Mammary epithelial cell (primary cell): ENCODE measurements at regions of chr22 and their contacts with region 1.

Region 1: DNA sequence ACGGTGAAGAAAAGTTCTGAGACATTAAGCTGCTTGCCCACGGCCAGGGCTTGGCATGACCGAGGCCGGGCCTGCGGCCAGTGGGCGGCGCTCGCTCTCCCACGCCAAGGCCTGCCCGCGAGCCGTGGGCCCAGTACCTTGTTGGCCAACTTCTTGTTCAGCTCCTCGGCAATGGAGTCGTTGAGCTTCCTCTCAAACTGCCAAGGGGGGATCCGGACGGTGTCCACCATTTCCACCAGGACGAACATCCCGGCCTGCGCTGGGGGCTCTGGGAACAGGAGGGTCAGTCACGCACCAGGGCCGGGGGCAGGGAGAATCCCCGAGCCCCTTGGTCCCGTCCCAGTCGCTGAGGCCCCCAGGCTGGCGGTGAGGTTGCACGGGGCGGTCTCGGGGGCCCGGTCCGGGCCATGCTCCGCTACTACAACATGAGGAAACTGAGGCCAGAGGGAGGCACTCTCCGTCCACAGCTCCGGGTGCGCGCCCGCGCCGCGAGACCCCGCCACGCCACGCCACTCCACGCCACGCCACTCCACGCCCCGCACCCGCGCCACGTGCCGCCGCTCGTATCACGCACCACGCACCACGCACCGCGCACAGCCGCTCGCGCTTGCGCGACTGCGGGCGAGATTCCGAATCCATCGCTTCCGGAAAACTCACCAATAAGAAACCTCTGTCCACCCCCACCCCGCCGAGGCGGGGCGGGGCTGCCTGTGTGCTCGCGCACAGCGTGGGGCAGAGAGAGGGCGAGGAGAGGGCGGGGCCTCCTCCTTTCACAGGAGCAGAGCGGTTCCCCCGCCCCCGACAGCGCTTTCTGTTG is at the start of gene POLR3H:
- DNase-seq: peak; percentile 96
- H3K4me3 ChIP-seq: peak within 1 kb of the TSS; percentile 73 to 95 (median 80)
- H3K27ac ChIP-seq: peak within 1 kb of the TSS; percentile 61
- H3K4me1 ChIP-seq: peaks cover 15% of the 10 kb centered on the region
- H3K27me3 ChIP-seq: no peaks in the 10 kb centered on the region
- CTCF ChIP-seq: peak; percentile 33 to 73
- total RNA-seq, gene POLR3H: 17.2 to 47.0 TPM

Region 2: GRCh38 chr22:41301105-41302020 is 242.7 kb before region 1 on chr22 and contains the start of gene ZC3H7B:
- CTCF ChIA-PET with region 1: no interaction called
- dilution Hi-C with region 1: no loop called
- in situ Hi-C with region 1: no loop called
- intact Hi-C with region 1: no loop called
- DNase-seq: peak; percentile 80
- H3K4me3 ChIP-seq: peak within 1 kb of the TSS; percentile 82 to 90 (median 86)
- H3K27ac ChIP-seq: peak within 1 kb of the TSS; percentile 75
- H3K4me1 ChIP-seq: peaks cover 21% of the 10 kb centered on the region
- H3K27me3 ChIP-seq: no peaks in the 10 kb centered on the region
- CTCF ChIP-seq: peak in 1 of 2 donors; percentile 70
- total RNA-seq, gene ZC3H7B: 30.0 to 62.9 TPM

Region 3: GRCh38 chr22:41589391-41590241 is 45.6 kb after region 1 on chr22 and contains the start of gene PMM1:
- CTCF ChIA-PET with region 1: interaction called, 4 read pairs
- dilution Hi-C with region 1: no loop called
- in situ Hi-C with region 1: no loop called
- intact Hi-C with region 1: loop called (anchors 1 kb)
- DNase-seq: peak; percentile 99
- H3K4me3 ChIP-seq: peak within 1 kb of the TSS; percentile 63 to 96 (median 78)
- H3K27ac ChIP-seq: peak within 1 kb of the TSS; percentile 60
- H3K4me1 ChIP-seq: peaks cover 10% of the 10 kb centered on the region
- H3K27me3 ChIP-seq: no peaks in the 10 kb centered on the region
- CTCF ChIP-seq: no peak
- total RNA-seq, gene PMM1: 21.2 to 44.8 TPM

Region 4: DNA sequence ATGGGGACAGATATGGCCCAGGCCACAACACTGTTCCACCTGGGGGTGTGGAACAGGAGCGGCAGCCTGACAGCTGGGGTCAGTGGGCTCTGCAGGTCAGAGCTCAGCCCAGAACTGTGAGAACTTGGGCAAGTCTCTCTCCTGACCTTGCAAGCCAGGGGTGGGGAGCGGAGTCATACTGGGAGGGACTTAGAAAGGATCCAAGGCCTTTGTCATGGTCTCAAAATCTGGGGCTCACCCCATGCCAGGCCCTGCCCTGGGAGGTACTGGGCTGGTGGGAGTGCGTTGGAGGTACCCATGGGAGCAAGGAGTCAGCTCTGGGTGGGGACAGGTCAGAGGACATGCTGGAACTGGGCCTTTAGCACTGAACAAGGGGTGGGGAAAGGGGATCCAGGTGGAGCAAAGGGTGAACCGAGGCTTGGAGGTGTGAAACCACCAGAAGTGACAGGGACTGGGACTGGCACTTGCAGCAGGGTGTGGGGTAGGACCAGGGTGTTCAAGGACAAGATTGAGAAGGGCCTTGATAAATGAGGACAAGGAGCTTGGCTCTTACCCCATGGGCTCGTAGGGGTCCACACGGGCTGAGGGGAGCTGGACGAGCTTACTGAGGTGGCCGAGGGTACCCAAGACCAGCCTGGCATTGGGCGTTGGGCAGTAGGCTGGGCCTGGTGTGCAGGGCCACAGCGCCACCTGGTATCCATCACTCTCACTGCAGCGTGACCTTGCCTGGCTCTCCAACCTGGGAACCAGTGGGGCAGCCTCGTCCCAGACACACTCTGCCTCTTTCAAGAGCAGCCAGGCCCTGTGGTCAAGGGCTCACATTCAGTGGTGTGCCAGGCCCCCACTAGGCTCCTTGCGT is 52.9 kb after region 1 on chr22:
- CTCF ChIA-PET with region 1: interaction called, 4 read pairs
- dilution Hi-C with region 1: no loop called
- in situ Hi-C with region 1: no loop called
- intact Hi-C with region 1: loop called (anchors 1 kb)
- DNase-seq: peak; percentile 66
- H3K4me3 ChIP-seq: no peak overlapping the region
- H3K27ac ChIP-seq: peak overlapping the region; percentile 75
- H3K4me1 ChIP-seq: peaks cover 31% of the 10 kb centered on the region
- H3K27me3 ChIP-seq: no peaks in the 10 kb centered on the region
- CTCF ChIP-seq: peak; percentile 81 to 97

Region 5: DNA sequence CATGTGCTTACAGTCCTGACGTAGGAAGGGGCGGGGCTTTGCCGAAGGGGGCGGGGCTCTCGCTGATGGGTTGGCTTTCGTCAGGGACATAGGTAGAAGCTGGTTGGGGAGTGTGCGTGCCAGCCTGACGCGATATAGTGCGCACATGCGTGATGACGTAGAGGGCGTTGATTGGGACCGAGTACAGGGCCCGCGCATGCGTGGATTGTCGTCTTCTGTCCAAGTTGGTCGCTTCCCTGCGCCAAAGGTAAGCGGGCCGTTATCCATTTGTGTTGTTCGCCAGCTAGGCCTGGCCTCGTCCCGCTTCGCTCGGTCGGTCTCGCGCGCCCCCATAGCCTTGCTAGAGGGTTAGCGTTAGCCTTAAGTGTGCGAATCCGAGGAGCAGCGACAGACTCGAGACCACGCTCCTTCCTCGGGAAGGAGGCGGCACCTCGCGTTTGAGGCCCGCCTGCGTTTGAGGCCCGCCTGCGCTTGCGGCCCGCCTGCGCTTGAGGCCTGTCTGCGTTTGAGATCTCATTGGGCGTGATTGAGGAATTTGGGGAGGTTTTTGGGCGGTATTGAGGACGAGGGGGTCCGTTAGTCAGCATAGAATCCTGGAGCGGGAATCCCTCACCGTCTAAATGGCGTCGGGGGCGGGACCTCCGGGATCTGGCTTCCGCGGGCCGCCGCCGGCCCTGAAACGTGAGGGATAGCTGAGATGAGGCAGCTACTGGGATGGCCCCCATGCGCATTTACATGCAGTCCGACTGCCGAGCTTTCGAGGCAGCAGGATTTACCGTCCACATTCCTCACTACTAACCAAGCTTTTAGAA is 77.2 kb after region 1 on chr22 and contains the start of gene XRCC6:
- CTCF ChIA-PET with region 1: no interaction called
- dilution Hi-C with region 1: no loop called
- in situ Hi-C with region 1: no loop called
- intact Hi-C with region 1: loop called (anchors 2 kb)
- DNase-seq: peak; percentile 98
- H3K4me3 ChIP-seq: peak within 1 kb of the TSS; percentile 74 to 98 (median 88)
- H3K27ac ChIP-seq: peak within 1 kb of the TSS; percentile 83
- H3K4me1 ChIP-seq: peaks cover 15% of the 10 kb centered on the region
- H3K27me3 ChIP-seq: no peaks in the 10 kb centered on the region
- CTCF ChIP-seq: no peak
- total RNA-seq, gene XRCC6: 223 to 263 TPM